Activated CD8-positive, alpha-beta T cell treated with anti-CD3 and anti-CD28 coated beads for 36 hours (primary cell): ENCODE measurements at regions of chr2 and their contacts with region 1.

Region 1: GRCh38 chr2:232321156-232321816 is 57.3 kb upstream of the ALPP start:
- DNase-seq: peak; percentile 87
- ATAC-seq: peak; percentile 81
- H3K4me3 Mint-ChIP-seq: peak overlapping the region; percentile 69
- H3K27ac Mint-ChIP-seq: peak overlapping the region; percentile 94
- H3K4me1 Mint-ChIP-seq: peaks cover 69% of the 10 kb centered on the region
- H3K27me3 Mint-ChIP-seq: no peaks in the 10 kb centered on the region
- CTCF ChIP-seq: peak; percentile 40

Region 2: DNA sequence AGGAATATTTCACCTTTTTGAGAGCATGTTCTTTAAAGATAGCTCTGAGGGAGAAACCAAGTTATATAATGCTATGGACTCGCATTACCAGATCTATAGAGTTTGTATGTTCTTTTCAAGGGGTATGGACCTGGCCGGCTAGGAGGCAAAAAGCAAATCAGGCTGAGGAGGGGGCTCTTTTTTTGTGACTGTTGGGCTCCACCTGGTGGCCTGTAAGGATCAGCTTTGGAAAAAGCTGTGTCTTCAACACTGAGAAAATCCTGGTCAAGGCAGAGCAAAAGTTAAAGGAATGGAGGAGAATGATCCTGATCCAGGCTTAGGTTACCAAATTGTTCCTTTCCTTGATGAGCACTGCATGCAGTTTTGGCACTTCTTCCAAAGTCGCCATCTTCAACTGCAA is 179.2 kb before region 1 on chr2:
- CTCF ChIA-PET with region 1: interaction called, 46 read pairs
- POLR2A ChIA-PET with region 1: no interaction called
- intact Hi-C with region 1: loop called (anchors 10 kb)
- DNase-seq: peak; percentile 69
- ATAC-seq: peak; percentile 57
- H3K4me3 Mint-ChIP-seq: no peak overlapping the region
- H3K27ac Mint-ChIP-seq: no peak overlapping the region
- H3K4me1 Mint-ChIP-seq: peaks cover 40% of the 10 kb centered on the region
- H3K27me3 Mint-ChIP-seq: no peaks in the 10 kb centered on the region
- CTCF ChIP-seq: peak; percentile 64

Region 3: GRCh38 chr2:232260075-232260474 is 61.2 kb before region 1 on chr2:
- CTCF ChIA-PET with region 1: no interaction called
- POLR2A ChIA-PET with region 1: no interaction called
- intact Hi-C with region 1: no loop called
- DNase-seq: no peak
- ATAC-seq: no peak
- H3K4me3 Mint-ChIP-seq: no peak overlapping the region
- H3K27ac Mint-ChIP-seq: no peak overlapping the region
- H3K4me1 Mint-ChIP-seq: no peaks in the 10 kb centered on the region
- H3K27me3 Mint-ChIP-seq: no peaks in the 10 kb centered on the region
- CTCF ChIP-seq: no peak

Region 4: GRCh38 chr2:232348936-232349335 is 27.6 kb after region 1 on chr2:
- CTCF ChIA-PET with region 1: no interaction called
- POLR2A ChIA-PET with region 1: no interaction called
- intact Hi-C with region 1: no loop called
- DNase-seq: no peak
- ATAC-seq: peak; percentile 56
- H3K4me3 Mint-ChIP-seq: no peak overlapping the region
- H3K27ac Mint-ChIP-seq: no peak overlapping the region
- H3K4me1 Mint-ChIP-seq: peaks cover 3% of the 10 kb centered on the region
- H3K27me3 Mint-ChIP-seq: peaks cover 24% of the 10 kb centered on the region
- CTCF ChIP-seq: no peak

Region 5: GRCh38 chr2:232473467-232473890 is 152.2 kb after region 1 on chr2:
- CTCF ChIA-PET with region 1: no interaction called
- POLR2A ChIA-PET with region 1: no interaction called
- intact Hi-C with region 1: no loop called
- DNase-seq: no peak
- ATAC-seq: no peak
- H3K4me3 Mint-ChIP-seq: no peak overlapping the region
- H3K27ac Mint-ChIP-seq: no peak overlapping the region
- H3K4me1 Mint-ChIP-seq: no peaks in the 10 kb centered on the region
- H3K27me3 Mint-ChIP-seq: peaks cover 35% of the 10 kb centered on the region
- CTCF ChIP-seq: no peak